Endothelial cell of umbilical vein (primary cell): ENCODE measurements at regions of chr11 and their contacts with region 1.

Region 1: DNA sequence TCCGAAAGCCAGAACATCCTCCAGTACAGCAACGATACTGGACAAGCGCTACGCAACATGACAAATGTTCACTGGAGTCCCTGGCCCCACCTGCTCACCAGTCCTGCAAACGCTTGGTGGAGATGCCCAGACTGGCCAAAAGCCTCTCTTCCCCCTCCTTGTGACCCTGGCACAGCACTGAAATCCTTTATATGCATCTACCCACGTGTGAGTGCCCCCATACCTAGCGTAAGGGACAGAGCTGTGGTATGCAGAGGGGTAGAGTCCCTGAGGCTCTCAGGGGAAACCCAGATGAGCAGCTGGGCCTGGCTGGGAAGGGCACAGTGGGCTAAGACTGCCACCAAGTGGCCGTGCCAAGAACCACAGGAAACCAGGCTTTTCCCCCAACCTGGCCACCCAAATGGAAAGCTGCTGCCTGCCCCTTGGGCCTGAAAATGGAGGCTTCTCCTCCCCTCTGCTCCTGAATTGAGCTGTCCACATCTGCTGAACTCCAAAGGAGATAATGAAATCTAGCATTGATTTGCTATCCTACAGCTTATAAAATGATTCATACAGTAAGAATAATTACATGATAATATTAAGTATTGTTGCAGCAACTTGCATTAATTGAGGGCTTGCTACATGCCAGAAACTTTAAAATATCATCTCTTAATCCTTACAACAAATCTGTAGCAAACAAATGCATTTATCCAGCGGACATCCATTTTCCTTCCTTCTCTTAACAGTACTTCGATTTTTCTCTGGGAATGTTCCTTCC is 24.8 kb upstream of the TTC12 start:
- DNase-seq: peak; percentile 59
- H3K4me3 ChIP-seq: no peak overlapping the region
- H3K27ac ChIP-seq: no peak overlapping the region
- H3K4me1 ChIP-seq: no peaks in the 10 kb centered on the region
- H3K27me3 ChIP-seq: no peaks in the 10 kb centered on the region
- CTCF ChIP-seq: peak; percentile 76 to 92
- POLR2A ChIP-seq: no peak

Region 2: DNA sequence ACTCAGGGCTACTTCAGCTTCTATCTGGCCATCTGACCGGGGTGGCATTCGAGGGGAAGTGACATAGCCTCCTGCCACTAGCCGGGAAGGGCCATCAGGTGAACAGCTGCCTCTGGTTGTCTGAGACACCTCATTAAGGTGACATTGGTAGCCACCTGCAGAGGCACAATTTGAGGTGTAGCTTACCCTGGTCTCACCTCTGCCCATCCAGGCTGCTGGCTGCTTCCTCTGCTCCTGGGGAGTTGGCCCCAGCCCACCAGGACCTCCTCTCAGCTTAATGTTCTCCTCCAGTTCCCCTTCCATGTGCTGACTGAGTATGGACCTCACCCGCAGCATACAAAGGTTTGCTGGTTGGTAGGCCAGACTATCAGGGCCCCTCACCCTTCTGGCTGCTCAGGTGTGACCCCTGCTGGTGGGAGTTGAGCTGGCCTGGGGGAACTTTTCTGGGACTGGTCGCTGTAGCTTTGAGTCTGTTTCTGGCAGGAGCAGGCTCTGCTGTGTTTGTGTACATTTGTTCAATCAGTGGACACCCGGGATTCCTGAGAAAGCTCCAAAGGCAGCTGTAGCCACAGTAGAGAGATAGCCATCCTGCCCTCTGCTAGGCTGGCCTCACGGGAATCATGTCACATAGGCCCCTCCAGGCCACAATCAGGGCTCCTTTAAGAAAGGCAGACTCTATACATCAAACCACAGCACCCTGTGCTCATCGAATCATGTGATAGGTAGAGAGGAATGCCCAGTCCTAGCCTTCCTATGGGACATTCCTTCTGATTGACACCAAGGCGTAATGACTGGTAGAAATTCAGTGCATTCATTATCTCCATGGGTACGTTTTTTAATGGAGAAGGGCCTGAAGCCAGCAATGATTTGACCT is 733.9 kb before region 1 on chr11:
- CTCF ChIA-PET with region 1: interaction called, 15 read pairs
- POLR2A ChIA-PET with region 1: no interaction called
- dilution Hi-C with region 1: no loop called
- intact Hi-C with region 1: no loop called
- DNase-seq: peak; percentile 43
- H3K4me3 ChIP-seq: no peak overlapping the region
- H3K27ac ChIP-seq: no peak overlapping the region
- H3K4me1 ChIP-seq: no peaks in the 10 kb centered on the region
- H3K27me3 ChIP-seq: no peaks in the 10 kb centered on the region
- CTCF ChIP-seq: peak; percentile 69 to 86
- POLR2A ChIP-seq: no peak

Region 3: GRCh38 chr11:112581782-112582181 is 707.8 kb before region 1 on chr11:
- CTCF ChIA-PET with region 1: interaction called, 401 read pairs
- POLR2A ChIA-PET with region 1: no interaction called
- dilution Hi-C with region 1: no loop called
- intact Hi-C with region 1: no loop called
- DNase-seq: no peak
- H3K4me3 ChIP-seq: no peak overlapping the region
- H3K27ac ChIP-seq: no peak overlapping the region
- H3K4me1 ChIP-seq: no peaks in the 10 kb centered on the region
- H3K27me3 ChIP-seq: no peaks in the 10 kb centered on the region
- CTCF ChIP-seq: no peak
- POLR2A ChIP-seq: no peak

Region 4: DNA sequence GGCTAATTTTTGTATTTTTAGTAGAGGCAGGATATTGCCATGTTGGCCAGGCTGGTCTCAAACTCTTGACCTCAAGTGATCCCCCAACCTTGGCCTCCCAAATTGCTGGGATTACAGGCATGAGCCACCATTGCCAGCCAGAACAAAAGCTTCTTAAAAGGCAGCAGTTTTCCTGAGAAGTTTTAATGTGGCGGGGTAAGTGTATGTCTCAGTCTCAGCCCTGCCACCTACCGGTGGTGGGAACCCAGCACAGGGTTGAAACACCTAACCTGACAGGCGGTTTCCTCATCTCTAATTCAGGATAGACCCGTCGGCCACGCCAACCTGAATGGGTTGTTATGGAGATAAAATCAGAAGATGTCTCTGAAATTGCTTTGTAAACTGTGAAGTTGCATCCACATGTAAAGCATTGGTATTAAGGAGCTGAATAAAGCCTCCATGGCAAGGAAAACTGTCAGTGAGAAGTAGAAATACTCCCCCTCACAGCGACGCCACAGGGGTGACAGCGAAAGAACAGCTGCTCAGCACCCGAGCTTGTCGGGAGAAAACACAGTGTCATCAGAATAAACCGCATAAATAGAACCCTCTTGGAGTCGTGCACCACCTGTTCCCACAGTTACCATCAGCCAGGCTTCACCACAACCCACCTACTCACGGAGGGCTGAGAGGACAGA is 494.3 kb before region 1 on chr11:
- CTCF ChIA-PET with region 1: no interaction called
- POLR2A ChIA-PET with region 1: no interaction called
- dilution Hi-C with region 1: no loop called
- intact Hi-C with region 1: loop called (anchors 5 kb)
- DNase-seq: no peak
- H3K4me3 ChIP-seq: no peak overlapping the region
- H3K27ac ChIP-seq: no peak overlapping the region
- H3K4me1 ChIP-seq: no peaks in the 10 kb centered on the region
- H3K27me3 ChIP-seq: no peaks in the 10 kb centered on the region
- CTCF ChIP-seq: peak; percentile 25 to 31
- POLR2A ChIP-seq: no peak

Region 5: GRCh38 chr11:113106507-113106906 is 183.1 kb before region 1 on chr11:
- CTCF ChIA-PET with region 1: no interaction called
- POLR2A ChIA-PET with region 1: no interaction called
- dilution Hi-C with region 1: no loop called
- intact Hi-C with region 1: no loop called
- DNase-seq: no peak
- H3K4me3 ChIP-seq: no peak overlapping the region
- H3K27ac ChIP-seq: no peak overlapping the region
- H3K4me1 ChIP-seq: no peaks in the 10 kb centered on the region
- H3K27me3 ChIP-seq: no peaks in the 10 kb centered on the region
- CTCF ChIP-seq: no peak
- POLR2A ChIP-seq: no peak

Region 6: DNA sequence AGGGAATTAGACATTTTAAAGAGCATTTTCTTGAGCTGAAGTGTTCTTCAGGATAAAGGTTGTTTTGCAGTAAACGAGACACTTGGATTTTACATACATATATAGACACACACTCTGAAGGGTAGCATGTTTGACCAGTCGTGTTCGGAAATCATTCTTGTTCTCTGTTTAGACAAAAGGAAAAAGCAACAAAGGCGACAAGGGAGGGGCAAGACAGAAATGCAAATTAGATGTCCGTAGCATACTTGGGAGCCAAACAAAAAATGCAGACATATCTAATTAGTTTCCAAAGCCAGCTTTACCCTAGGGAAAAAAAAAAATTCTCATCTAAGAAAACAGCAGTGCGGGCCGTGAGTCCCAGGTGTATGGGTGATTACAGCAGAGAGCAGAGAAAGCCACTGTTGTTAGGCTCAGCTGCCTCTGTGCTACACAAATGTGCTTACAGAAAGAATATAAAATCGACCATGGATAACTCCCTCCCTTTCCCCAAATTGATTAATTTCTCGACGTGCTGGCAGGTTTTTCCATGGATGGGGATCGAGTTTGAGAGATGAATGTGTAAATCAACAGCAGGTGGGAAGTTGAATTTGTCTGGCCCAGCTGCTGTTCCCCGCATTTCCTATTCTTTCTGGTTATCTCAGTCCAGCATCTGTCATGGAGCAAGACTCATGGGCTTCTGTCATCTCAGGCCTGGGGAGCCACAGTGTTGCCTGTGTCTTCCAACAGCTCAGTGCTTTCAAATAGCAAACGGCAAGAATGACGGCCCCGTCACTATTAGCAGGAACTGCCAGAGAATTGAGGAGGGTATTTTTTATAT is 151.7 kb before region 1 on chr11:
- CTCF ChIA-PET with region 1: no interaction called
- POLR2A ChIA-PET with region 1: no interaction called
- dilution Hi-C with region 1: no loop called
- intact Hi-C with region 1: no loop called
- DNase-seq: no peak
- H3K4me3 ChIP-seq: no peak overlapping the region
- H3K27ac ChIP-seq: no peak overlapping the region
- H3K4me1 ChIP-seq: no peaks in the 10 kb centered on the region
- H3K27me3 ChIP-seq: no peaks in the 10 kb centered on the region
- CTCF ChIP-seq: no peak
- POLR2A ChIP-seq: no peak